Right cardiac atrium (tissue), 5 donors: ENCODE measurements at regions of chr17 and their contacts with region 1.

Region 1: DNA sequence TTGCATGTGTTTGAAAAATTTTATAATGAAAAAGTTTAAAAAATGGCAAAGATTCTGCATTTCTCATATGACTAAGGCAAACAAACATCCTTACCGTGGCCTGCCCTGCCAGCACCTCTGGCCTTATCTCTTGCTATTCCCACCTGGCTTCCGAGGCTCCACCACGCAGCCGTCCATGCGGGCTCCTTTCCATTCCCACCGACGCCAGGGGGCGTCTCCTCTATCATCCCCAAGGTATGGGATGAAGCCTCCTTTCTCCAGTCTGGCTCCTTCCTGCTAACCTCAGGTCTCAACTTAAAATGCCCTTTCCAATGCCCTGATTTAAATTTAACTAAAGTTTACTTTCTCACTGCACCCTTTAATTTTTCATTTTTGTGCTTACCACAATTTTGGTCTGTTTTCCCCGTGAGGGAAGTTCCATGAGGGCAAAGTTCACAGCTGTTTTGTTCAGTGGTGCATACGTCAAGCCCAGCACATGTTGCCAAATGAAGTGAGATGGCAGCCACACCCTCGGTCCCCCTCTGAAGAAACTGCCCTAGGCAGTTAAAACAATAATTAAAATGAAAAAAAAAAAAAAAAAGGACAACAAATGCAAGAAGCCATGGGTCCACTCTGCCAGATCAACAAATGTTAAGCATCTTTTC is 13.3 kb upstream of the SDK2 start:
- DNase-seq: peak; percentile 47 to 86 (median 74)
- ATAC-seq: peak in 1 of 2 donors; percentile 68
- H3K4me3 ChIP-seq: no peak overlapping the region
- H3K27ac ChIP-seq: no peak overlapping the region
- H3K4me1 ChIP-seq: no peaks in the 10 kb centered on the region
- H3K27me3 ChIP-seq: no peaks in the 10 kb centered on the region

Region 2: DNA sequence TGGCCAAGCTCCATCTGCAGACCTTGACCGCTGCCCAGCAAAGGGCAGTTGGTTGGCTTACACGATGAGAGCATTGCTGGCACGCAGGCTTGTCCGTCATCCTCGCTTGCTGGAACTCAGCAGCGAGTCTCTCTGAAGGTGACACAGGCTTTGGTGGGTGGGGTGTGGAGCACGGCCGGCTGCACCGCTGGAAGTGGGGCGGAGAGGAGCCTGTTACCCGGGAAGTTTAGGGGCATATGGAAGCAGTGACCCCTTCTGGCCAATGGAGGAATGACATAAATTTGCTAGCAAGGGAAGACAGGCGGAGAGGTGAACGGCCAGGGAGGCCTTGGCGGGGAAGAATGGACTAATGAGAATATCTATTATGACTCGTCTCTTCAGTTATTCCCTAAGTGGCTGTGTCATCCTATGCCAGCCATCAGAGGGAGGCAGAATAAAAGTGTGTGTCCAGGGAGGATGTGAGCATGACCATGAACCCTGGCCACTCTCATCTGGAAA is 52.5 kb after region 1 on chr17:
- intact Hi-C with region 1: loop called in 1 of 4 experiments (anchors 10 kb)
- DNase-seq: peak; percentile 63 to 79 (median 77)
- ATAC-seq: peak; percentile 87 to 92
- H3K4me3 ChIP-seq: no peak overlapping the region
- H3K27ac ChIP-seq: no peak overlapping the region
- H3K4me1 ChIP-seq: no peaks in the 10 kb centered on the region
- H3K27me3 ChIP-seq: no peaks in the 10 kb centered on the region

Region 3: DNA sequence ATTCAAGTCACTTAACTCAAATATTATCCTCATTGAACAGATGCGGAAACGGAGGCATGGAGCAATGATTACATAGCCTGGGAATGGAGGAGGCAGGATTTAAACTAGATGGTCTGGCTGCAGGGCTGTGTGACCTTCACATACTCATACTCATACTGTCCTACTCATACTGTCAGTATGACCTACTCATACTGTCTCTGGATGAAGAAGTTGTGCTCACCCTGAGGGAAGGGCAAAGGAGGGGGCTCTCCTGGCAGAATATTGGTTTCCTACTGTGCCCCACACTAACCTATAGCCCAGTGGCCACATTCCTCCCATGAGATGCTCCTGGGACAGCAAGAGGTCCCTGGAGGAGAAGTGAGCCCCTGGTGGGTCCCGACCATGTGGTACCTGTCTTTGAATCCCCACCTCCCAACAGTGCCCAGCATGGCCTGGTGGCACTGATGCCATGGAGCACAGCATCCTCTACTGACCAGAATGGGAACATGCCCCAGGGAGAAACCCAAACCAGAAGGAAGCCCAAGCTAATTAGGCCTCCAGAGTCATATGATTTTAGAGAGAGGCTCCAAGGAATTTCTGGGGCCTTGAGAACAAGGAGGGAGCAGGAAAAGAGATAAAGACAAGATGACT is 184.0 kb after region 1 on chr17:
- intact Hi-C with region 1: loop called in 3 of 4 experiments (anchors 10 kb)
- DNase-seq: no peak
- ATAC-seq: peak in 1 of 2 donors; percentile 38
- H3K4me3 ChIP-seq: no peak overlapping the region
- H3K27ac ChIP-seq: no peak overlapping the region
- H3K4me1 ChIP-seq: no peaks in the 10 kb centered on the region
- H3K27me3 ChIP-seq: no peaks in the 10 kb centered on the region